Esophagus muscularis mucosa (tissue), 4 donors: ENCODE measurements at regions of chrX and their contacts with region 1.

Region 1: GRCh38 chrX:13658602-13659001 is 5.7 kb downstream of the TCEANC start:
- DNase-seq: no peak
- H3K4me3 ChIP-seq: no peak overlapping the region
- H3K27ac ChIP-seq: peak overlapping the region; percentile 56 to 62 (median 58)
- H3K4me1 ChIP-seq: peaks cover 0 to 33% (median 21%) of the 10 kb centered on the region in 4 donors
- H3K27me3 ChIP-seq: no peaks in the 10 kb centered on the region
- CTCF ChIP-seq: peak; percentile 64 to 87 (median 70)
- EP300 ChIP-seq: no peak
- POLR2A ChIP-seq: no peak

Region 2: GRCh38 chrX:13747836-13748235 is 89.2 kb after region 1 on chrX:
- intact Hi-C with region 1: loop called (anchors 5 kb)
- DNase-seq: no peak
- H3K4me3 ChIP-seq: no peak overlapping the region
- H3K27ac ChIP-seq: no peak overlapping the region
- H3K4me1 ChIP-seq: peaks cover 0 to 8% (median under 1%) of the 10 kb centered on the region in 4 donors
- H3K27me3 ChIP-seq: no peaks in the 10 kb centered on the region
- CTCF ChIP-seq: peak; percentile 12 to 52 (median 24)
- EP300 ChIP-seq: no peak
- POLR2A ChIP-seq: no peak

Region 3: GRCh38 chrX:13786048-13786447 is 127.4 kb after region 1 on chrX:
- intact Hi-C with region 1: no loop called
- DNase-seq: no peak
- H3K4me3 ChIP-seq: no peak overlapping the region
- H3K27ac ChIP-seq: no peak overlapping the region
- H3K4me1 ChIP-seq: peaks cover 0 to 13% (median 10%) of the 10 kb centered on the region in 4 donors
- H3K27me3 ChIP-seq: peaks cover 0 to 7% (median 0%) of the 10 kb centered on the region in 4 donors
- CTCF ChIP-seq: no peak
- EP300 ChIP-seq: no peak
- POLR2A ChIP-seq: no peak